K562 (cell line): ENCODE measurements at regions of chr5 and their contacts with region 1.

Region 1: DNA sequence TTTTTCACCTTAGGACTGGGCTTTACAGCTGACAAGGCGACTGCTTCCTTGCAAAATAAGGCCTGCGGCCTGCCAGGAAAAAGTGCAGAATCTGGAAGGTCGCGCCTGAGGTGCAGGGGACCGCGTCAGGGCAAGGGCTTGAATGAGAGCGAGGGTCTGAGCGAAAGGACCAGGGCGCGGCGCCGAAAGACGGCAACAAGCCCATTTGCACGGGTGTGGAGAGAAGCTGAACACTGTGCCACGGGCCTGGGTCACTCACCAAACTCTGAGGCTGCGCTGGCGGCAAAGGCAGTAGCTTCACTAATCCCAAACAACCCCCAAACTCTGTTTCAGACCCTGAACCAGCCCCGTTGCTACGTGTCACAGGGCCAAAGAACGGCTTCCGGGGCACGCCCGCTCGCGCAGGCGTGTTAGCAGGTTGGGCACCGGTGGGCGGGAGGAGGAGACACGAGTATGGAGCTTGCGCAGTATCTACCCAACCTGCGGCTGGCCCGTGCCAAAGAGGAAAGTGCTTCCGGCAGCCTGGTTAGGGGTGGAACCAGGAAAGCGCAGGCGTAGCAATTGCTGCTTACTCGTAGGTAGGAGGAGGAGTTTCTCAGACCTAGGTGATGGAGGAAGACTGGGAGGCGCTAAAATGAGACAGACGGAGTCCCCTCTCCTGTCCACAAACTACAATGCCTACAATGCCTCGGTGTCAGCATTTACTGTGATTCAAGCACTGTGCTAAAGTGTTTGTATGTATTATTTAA is at the starts of genes KCTD16 and YIPF5:
- DNase-seq: peak; percentile 94 to 98 (median 96)
- ATAC-seq: peak; percentile 100
- H3K4me3 ChIP-seq: peak within 1 kb of the TSS; percentile 96
- H3K27ac ChIP-seq: peak within 1 kb of the TSS; percentile 87
- H3K4me1 ChIP-seq: peaks cover 0 to 9% of the 10 kb centered on the region in 2 experiments; a peak in 2 of 5 replicates
- H3K27me3 ChIP-seq: no peaks in the 10 kb centered on the region; a peak in 1 of 5 replicates
- CTCF ChIP-seq: no peak
- EP300 ChIP-seq: no peak
- POLR2A ChIP-seq: peak; percentile 89
- RAD21 ChIP-seq: no peak
- polyA plus RNA-seq, gene KCTD16: not detected
- polyA plus RNA-seq, gene YIPF5: 34.4 to 44.0 TPM

Region 2: GRCh38 chr5:143413958-143414669 is 756.3 kb before region 1 on chr5:
- CTCF ChIA-PET with region 1: no interaction called
- POLR2A ChIA-PET with region 1: no interaction called
- in situ Hi-C with region 1: no loop called
- intact Hi-C with region 1: loop called (anchors 10 kb)
- DNase-seq: no peak
- ATAC-seq: no peak
- H3K4me3 ChIP-seq: no peak overlapping the region
- H3K27ac ChIP-seq: no peak overlapping the region
- H3K4me1 ChIP-seq: no peaks in the 10 kb centered on the region; a peak in 2 of 5 replicates
- H3K27me3 ChIP-seq: peaks cover 0 to 1% of the 10 kb centered on the region in 2 experiments; a peak in 1 of 5 replicates
- CTCF ChIP-seq: no peak
- EP300 ChIP-seq: no peak
- POLR2A ChIP-seq: no peak
- RAD21 ChIP-seq: no peak